H1 (cell line): ENCODE measurements at regions of chr1 and their contacts with region 1.

Region 1: GRCh38 chr1:160161965-160162705 is 10.7 kb downstream of the ATP1A4 start:
- DNase-seq: peak; percentile 54 to 73
- H3K4me3 ChIP-seq: no peak overlapping the region
- H3K27ac ChIP-seq: no peak overlapping the region
- H3K4me1 ChIP-seq: peaks cover 0 to 3% (median 1%) of the 10 kb centered on the region in 4 experiments; a peak in 3 of 7 replicates
- H3K27me3 ChIP-seq: no peaks in the 10 kb centered on the region; a peak in 2 of 7 replicates
- CTCF ChIP-seq: peak; percentile 87 to 98 (median 95)
- EP300 ChIP-seq: no peak
- POLR2A ChIP-seq: no peak
- RAD21 ChIP-seq: peak; percentile 93 to 96

Region 2: GRCh38 chr1:160085686-160086455 is 76.3 kb before region 1 on chr1:
- CTCF ChIA-PET with region 1: interaction called, 14 read pairs
- POLR2A ChIA-PET with region 1: no interaction called
- DNase-seq: peak; percentile 88 to 96
- H3K4me3 ChIP-seq: no peak overlapping the region
- H3K27ac ChIP-seq: no peak overlapping the region
- H3K4me1 ChIP-seq: peaks cover 0 to 5% (median 3%) of the 10 kb centered on the region in 4 experiments; a peak in 4 of 7 replicates
- H3K27me3 ChIP-seq: peaks cover 0 to 35% (median 27%) of the 10 kb centered on the region in 4 experiments; a peak in 6 of 7 replicates
- CTCF ChIP-seq: peak; percentile 91 to 99 (median 95)
- EP300 ChIP-seq: no peak
- POLR2A ChIP-seq: no peak
- RAD21 ChIP-seq: peak; percentile 83 to 88

Region 3: GRCh38 chr1:160108888-160109662 is 53.1 kb before region 1 on chr1:
- CTCF ChIA-PET with region 1: interaction called, 38 read pairs
- POLR2A ChIA-PET with region 1: no interaction called
- DNase-seq: peak in 1 of 2 experiments; percentile 69
- H3K4me3 ChIP-seq: no peak overlapping the region
- H3K27ac ChIP-seq: no peak overlapping the region
- H3K4me1 ChIP-seq: peaks cover 8 to 32% (median 20%) of the 10 kb centered on the region in 4 experiments
- H3K27me3 ChIP-seq: no peaks in the 10 kb centered on the region; a peak in 1 of 7 replicates
- CTCF ChIP-seq: peak; percentile 4 to 73 (median 44)
- EP300 ChIP-seq: peak in 1 of 2 experiments; percentile 49; a peak in 1 of 3 replicates
- POLR2A ChIP-seq: no peak
- RAD21 ChIP-seq: peak; percentile 24 to 35; a peak in 3 of 4 replicates

Region 4: DNA sequence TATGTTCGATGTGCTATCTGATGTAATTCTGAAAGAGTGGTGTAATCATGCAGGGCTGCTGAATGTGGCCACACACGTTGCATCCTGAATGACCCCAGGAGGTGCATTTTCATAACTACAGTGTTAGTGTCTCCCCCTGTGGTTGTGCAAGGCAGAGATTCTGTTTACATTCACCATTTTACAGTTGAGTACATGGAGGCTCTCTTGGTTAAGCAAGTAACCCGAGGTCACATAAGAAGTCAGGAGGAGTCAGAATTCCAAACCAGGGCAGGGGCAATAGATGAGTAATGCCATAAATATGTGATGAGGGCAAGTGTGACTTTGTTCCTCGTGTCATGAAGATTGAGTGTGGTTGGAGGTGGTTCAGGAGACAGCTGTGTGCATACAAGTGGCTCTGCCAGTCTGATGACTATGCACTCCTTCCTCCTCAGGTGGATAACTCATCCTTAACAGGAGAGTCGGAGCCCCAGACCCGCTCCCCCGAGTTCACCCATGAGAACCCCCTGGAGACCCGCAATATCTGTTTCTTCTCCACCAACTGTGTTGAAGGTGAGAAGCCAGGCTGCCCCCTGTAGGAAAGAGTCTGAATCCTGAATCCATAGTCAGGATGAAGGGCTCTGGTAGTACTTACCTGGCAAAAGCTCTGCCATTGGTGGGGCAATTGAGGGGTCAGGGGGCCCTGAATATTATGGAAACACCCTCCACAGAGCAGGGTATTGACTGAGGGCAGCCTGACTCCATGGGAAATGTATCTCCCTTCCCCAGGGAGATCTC is 37.2 kb before region 1 on chr1:
- CTCF ChIA-PET with region 1: interaction called, 10 read pairs
- POLR2A ChIA-PET with region 1: no interaction called
- DNase-seq: no peak
- H3K4me3 ChIP-seq: no peak overlapping the region
- H3K27ac ChIP-seq: no peak overlapping the region
- H3K4me1 ChIP-seq: peaks cover 0 to 6% (median 0%) of the 10 kb centered on the region in 4 experiments; a peak in 2 of 7 replicates
- H3K27me3 ChIP-seq: no peaks in the 10 kb centered on the region
- CTCF ChIP-seq: peak in 2 of 3 experiments; percentile 25 to 39; a peak in 3 of 4 replicates
- EP300 ChIP-seq: no peak
- POLR2A ChIP-seq: no peak
- RAD21 ChIP-seq: peak; percentile 30 to 47; a peak in 3 of 4 replicates

Region 5: DNA sequence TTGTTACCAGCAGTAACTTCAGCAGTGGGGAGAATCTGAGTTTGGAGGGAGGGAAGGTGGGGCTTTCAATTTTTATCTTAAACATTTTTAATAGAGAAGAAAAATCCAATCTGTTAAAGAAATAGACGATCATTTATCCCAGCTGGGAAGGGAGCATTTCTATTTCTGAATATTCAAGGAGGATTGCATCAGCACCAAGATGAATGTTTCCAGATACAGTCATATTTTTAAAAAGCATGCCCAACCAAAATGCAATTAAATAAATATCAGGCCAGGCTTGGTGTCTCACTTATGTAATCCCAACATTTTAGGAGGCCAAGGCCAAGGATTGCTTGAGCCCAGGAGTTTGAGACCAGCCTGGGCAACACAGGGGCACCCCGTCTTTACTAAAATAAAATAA is 12.4 kb before region 1 on chr1:
- CTCF ChIA-PET with region 1: interaction called, 49 read pairs
- POLR2A ChIA-PET with region 1: interaction called, 3 read pairs
- DNase-seq: no peak
- H3K4me3 ChIP-seq: no peak overlapping the region
- H3K27ac ChIP-seq: no peak overlapping the region
- H3K4me1 ChIP-seq: 0 out of 7 replicates have a peak, but pooled peaks cover 0 to 2% (median 0%) of the 10 kb centered on the region in 4 experiments
- H3K27me3 ChIP-seq: no peaks in the 10 kb centered on the region; a peak in 1 of 7 replicates
- CTCF ChIP-seq: no peak
- EP300 ChIP-seq: no peak
- POLR2A ChIP-seq: no peak
- RAD21 ChIP-seq: no peak

Region 6: DNA sequence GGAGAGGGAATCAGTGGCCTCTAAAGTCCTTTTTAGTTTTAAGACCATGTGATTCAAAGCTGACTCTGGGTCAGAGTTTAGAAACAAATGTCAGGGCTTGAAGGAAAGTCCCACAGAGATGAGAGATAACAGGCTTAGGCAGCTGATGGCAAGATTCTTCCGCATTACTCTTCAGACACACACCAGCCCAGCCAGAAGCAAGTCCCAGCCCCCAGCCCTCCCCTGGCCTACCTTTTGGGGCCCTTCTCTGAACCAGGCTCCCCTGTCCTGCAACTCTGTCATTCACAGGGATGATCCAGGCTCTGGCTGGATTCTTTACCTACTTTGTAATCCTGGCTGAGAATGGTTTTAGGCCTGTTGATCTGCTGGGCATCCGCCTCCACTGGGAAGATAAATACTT is 15.1 kb after region 1 on chr1:
- CTCF ChIA-PET with region 1: interaction called, 21 read pairs
- POLR2A ChIA-PET with region 1: interaction called, 5 read pairs
- DNase-seq: no peak
- H3K4me3 ChIP-seq: no peak overlapping the region
- H3K27ac ChIP-seq: no peak overlapping the region
- H3K4me1 ChIP-seq: peaks cover 0 to 11% (median 3%) of the 10 kb centered on the region in 4 experiments; a peak in 6 of 7 replicates
- H3K27me3 ChIP-seq: peaks cover 0 to 2% (median 0%) of the 10 kb centered on the region in 4 experiments; a peak in 1 of 7 replicates
- CTCF ChIP-seq: no peak
- EP300 ChIP-seq: no peak
- POLR2A ChIP-seq: no peak
- RAD21 ChIP-seq: no peak

Region 7: DNA sequence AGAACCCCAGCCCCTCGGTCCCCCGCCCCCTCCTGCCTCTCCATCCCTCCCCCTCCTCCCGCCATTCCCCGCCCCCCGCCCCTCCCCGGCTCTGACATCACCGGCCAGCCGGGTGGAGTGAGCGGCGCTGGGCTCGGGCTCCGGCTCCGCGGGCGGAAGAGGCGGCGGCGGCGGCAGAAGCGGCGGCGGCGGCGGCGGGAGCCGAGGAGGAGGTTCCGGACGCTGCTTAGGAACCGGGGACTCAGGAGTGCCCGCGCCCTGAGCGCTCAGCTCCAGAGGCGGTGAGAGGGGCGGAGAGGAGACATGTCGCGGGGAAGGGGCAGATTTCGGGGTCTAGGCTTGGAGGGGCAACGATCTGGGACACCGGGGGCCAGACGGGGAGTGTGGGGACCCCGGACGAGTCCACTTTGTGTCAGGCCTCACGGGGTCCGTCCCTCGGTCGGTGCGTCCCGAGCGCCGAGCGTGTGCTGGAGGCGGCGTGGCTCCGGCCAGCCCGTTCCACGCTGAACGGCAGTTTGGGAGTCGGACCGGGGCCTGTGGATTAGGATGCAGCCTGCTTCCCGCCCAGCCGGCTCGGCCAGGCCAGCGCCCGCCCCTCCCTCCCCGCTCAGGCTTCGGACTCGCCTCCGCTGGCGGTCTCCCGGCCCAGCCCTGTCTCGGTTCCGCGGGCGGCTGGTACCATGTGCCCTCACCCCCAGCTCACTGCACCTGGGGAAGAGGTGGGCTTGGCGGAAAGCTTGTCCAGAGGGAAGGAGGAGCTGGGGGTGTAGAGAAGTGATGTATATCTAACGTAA is 43.3 kb after region 1 on chr1 and contains the start of gene PEA15:
- CTCF ChIA-PET with region 1: interaction called, 257 read pairs
- POLR2A ChIA-PET with region 1: interaction called, 107 read pairs
- DNase-seq: peak in 1 of 2 experiments; percentile 82
- H3K4me3 ChIP-seq: peak within 1 kb of the TSS; percentile 70 to 99 (median 86)
- H3K27ac ChIP-seq: peak within 1 kb of the TSS; percentile 75; the same call in 1 of the 2 replicates
- H3K4me1 ChIP-seq: peaks cover 13 to 35% (median 20%) of the 10 kb centered on the region in 4 experiments
- H3K27me3 ChIP-seq: no peaks in the 10 kb centered on the region
- CTCF ChIP-seq: no peak
- EP300 ChIP-seq: no peak
- POLR2A ChIP-seq: peak in 1 of 2 experiments; percentile 48; a peak in 2 of 3 replicates
- RAD21 ChIP-seq: no peak
- total RNA-seq, gene PEA15: 75.1 and 78.8 TPM in 2 replicates